PC-3 (cell line): ENCODE measurements at regions of chr1 and their contacts with region 1.

Region 1: DNA sequence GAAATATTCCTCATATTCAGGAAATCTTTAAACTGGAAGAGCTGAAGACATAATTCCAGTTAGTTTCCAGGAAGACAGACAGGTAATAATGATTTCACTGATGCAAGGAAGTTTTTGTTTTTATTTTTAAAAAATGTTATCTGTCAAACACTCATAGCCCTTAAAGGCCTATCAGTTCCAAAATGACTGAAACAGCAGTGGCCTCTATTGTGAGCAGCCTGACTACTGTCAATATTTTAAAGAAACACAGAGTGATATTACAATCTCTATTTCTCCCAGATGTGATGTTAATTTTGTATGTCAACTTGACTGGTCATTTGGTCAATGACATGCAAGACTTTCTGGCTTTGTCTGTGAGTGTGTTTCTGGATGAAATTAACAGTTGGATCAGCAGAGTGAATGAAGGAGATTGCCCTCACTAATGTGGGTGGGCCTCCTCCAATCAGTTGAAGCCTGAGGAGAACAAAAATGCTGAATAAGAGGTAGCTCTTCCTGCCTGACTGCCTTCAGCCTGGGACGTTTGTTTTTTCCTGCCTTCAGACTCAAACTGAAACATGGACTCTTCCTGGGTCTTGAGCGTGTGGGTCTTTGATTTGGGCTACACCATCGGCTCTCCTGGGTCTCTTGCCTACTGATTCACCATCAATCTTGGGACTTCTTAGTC is 31.3 kb upstream of the SLC30A10 start:
- DNase-seq: no peak
- ATAC-seq: no peak
- H3K4me3 ChIP-seq: no peak overlapping the region
- H3K27ac ChIP-seq: no peak overlapping the region
- H3K4me1 ChIP-seq: peaks cover 9% of the 10 kb centered on the region
- H3K27me3 ChIP-seq: peaks cover 17% of the 10 kb centered on the region
- CTCF ChIP-seq: no peak

Region 2: GRCh38 chr1:219876798-219877209 is 82.9 kb before region 1 on chr1:
- CTCF ChIA-PET with region 1: no interaction called
- POLR2A ChIA-PET with region 1: no interaction called
- intact Hi-C with region 1: loop called (anchors 2 kb)
- DNase-seq: peak; percentile 64
- ATAC-seq: peak; percentile 89
- H3K4me3 ChIP-seq: no peak overlapping the region
- H3K27ac ChIP-seq: no peak overlapping the region
- H3K4me1 ChIP-seq: no peaks in the 10 kb centered on the region
- H3K27me3 ChIP-seq: peaks cover 85% of the 10 kb centered on the region
- CTCF ChIP-seq: peak; percentile 91

Region 3: DNA sequence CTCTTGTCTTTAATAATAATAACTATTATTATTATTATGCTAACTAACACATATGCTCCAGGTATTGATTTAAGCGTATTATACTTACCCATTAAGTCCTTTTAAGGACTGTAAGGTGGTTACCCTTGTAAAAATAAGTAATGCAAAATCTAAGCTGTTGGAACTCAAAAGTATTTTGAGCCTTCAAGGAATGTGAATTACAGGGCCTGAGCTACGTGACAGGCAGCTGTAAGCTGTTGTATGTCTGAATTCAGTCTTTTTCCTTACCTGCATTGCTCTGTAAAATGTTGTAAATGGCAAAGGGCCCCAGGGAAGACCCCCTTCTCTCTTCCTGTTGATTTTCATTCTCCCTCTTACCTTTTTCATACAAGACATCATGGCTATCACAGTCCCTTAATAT is 39.1 kb before region 1 on chr1:
- CTCF ChIA-PET with region 1: interaction called, 3 read pairs
- POLR2A ChIA-PET with region 1: no interaction called
- intact Hi-C with region 1: loop called (anchors 2 kb)
- DNase-seq: no peak
- ATAC-seq: no peak
- H3K4me3 ChIP-seq: no peak overlapping the region
- H3K27ac ChIP-seq: no peak overlapping the region
- H3K4me1 ChIP-seq: peaks cover 7% of the 10 kb centered on the region
- H3K27me3 ChIP-seq: 0 out of 2 replicates have a peak, but pooled peaks cover 5% of the 10 kb centered on the region
- CTCF ChIP-seq: no peak

Region 4: GRCh38 chr1:220013497-220013896 is 53.8 kb after region 1 on chr1:
- CTCF ChIA-PET with region 1: no interaction called
- POLR2A ChIA-PET with region 1: no interaction called
- intact Hi-C with region 1: no loop called
- DNase-seq: no peak
- ATAC-seq: no peak
- H3K4me3 ChIP-seq: no peak overlapping the region
- H3K27ac ChIP-seq: no peak overlapping the region
- H3K4me1 ChIP-seq: no peaks in the 10 kb centered on the region
- H3K27me3 ChIP-seq: no peaks in the 10 kb centered on the region
- CTCF ChIP-seq: no peak

Region 5: DNA sequence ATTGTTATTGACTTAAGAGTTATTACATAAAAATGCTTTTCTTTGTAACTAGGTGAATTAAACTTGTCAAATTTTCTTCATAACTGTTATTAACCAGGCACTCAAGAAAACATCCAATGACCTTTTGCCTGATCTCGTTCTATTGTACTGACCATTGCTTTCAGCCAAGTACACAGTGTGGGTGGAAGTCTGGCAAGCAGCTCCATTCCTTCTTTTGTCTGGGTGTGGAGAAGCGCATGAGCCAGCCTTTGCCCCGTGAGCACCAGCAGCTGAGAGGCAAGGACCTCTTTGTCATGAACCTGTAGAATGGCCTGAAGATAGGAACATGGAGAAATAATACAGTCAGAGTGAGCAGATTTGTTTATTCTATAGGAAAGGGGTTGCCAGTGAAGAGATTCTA is 191.8 kb after region 1 on chr1:
- CTCF ChIA-PET with region 1: no interaction called
- POLR2A ChIA-PET with region 1: no interaction called
- intact Hi-C with region 1: no loop called
- DNase-seq: no peak
- ATAC-seq: no peak
- H3K4me3 ChIP-seq: no peak overlapping the region
- H3K27ac ChIP-seq: no peak overlapping the region
- H3K4me1 ChIP-seq: no peaks in the 10 kb centered on the region
- H3K27me3 ChIP-seq: no peaks in the 10 kb centered on the region
- CTCF ChIP-seq: no peak

Region 6: GRCh38 chr1:220290140-220290761 is 330.6 kb after region 1 on chr1:
- CTCF ChIA-PET with region 1: no interaction called
- POLR2A ChIA-PET with region 1: no interaction called
- intact Hi-C with region 1: no loop called
- DNase-seq: no peak
- ATAC-seq: no peak
- H3K4me3 ChIP-seq: no peak overlapping the region
- H3K27ac ChIP-seq: no peak overlapping the region
- H3K4me1 ChIP-seq: no peaks in the 10 kb centered on the region
- H3K27me3 ChIP-seq: peaks cover 84% of the 10 kb centered on the region
- CTCF ChIP-seq: no peak